Transverse colon (tissue), 4 donors: ENCODE measurements at regions of chr16 and their contacts with region 1.

Region 1: DNA sequence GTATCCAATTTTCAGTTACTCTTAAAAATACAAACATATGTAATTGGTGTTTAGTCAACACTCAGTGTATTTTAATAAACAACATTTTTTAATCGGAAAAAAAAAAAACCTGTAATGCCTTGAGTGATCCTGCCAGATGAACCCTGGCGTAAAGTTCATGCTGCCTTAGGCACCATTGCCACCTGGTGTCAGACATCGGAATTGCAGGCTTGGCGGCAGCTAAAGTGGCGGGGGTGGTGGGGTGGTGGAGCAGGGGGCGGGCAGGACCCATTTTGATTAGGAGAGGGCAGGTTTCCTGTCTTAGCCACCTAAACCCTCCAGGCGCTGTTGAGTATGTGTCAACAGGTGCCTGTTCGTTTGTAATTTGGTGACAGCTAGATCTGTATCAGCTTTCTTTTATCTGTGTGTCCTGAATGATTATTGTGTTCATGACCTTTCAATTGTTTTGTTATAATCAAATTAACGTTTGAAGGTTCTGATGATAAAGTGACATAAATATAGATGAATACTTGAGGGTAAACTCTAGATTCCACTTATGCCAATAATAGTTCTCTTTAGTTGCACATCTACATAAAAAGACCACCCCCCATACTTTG is 588.7 kb downstream of the CDH13 start:
- DNase-seq: peak; percentile 37
- H3K4me3 ChIP-seq: no peak overlapping the region
- H3K27ac ChIP-seq: no peak overlapping the region
- H3K4me1 ChIP-seq: no peaks in the 10 kb centered on the region
- H3K27me3 ChIP-seq: no peaks in the 10 kb centered on the region
- CTCF ChIP-seq: peak; percentile 67 to 92 (median 82)
- EP300 ChIP-seq: no peak
- POLR2A ChIP-seq: no peak

Region 2: DNA sequence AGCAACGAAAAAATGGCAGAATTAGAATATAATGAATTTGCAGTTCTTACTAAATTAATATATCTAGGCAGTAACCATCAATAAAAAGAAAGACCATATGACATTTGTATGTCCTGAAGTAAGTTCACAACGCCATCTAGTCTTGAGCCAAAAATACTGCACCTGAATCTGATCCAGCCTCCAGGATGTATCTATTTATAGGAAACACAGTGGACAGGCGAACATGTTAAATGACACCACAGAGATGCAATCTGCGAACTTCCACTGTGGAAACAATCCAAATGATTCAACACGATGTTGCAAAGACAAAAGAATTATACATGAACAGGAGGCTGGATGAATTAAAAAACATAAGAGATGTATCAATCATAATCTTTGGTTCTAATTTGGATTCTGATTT is 391.1 kb before region 1 on chr16:
- in situ Hi-C with region 1: no loop called
- intact Hi-C with region 1: no loop called
- DNase-seq: no peak
- H3K4me3 ChIP-seq: no peak overlapping the region
- H3K27ac ChIP-seq: no peak overlapping the region
- H3K4me1 ChIP-seq: no peaks in the 10 kb centered on the region
- H3K27me3 ChIP-seq: no peaks in the 10 kb centered on the region
- CTCF ChIP-seq: peak in 1 of 5 experiments; percentile 5
- EP300 ChIP-seq: no peak
- POLR2A ChIP-seq: no peak

Region 3: GRCh38 chr16:83305092-83305491 is 89.6 kb after region 1 on chr16:
- in situ Hi-C with region 1: loop called in 1 of 4 experiments (anchors 25 kb)
- intact Hi-C with region 1: no loop called
- DNase-seq: no peak
- H3K4me3 ChIP-seq: no peak overlapping the region
- H3K27ac ChIP-seq: no peak overlapping the region
- H3K4me1 ChIP-seq: no peaks in the 10 kb centered on the region
- H3K27me3 ChIP-seq: no peaks in the 10 kb centered on the region
- CTCF ChIP-seq: no peak
- EP300 ChIP-seq: no peak
- POLR2A ChIP-seq: no peak